ENCODE measurements at regions of chr3 and their contacts with region 1.

Region 1: DNA sequence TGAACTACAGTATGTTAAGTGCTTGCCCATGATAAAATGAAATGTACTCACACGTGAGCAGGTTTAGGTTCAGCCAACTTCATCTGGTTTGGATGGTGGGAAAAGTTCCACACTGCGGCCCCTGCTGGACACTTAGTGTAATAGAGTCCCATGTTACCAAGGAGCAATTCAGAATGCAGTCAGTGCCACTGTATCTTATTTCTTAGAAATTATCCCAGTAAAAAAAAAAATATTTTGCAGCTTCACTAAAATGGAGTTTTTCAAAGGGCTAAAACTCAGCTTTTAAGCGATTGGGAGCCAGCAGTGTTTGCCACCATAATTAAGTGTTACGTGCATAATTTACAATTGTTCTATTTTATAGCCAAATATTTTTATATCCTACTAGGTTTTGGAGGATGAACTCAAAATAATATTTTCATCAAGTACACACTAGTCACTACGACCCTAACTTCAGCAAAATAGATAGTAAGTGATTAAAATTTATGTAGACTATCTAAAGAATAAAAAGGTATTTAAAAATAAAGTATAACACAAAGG is 371.7 kb upstream of the GBE1 start:
- DNase-seq: peak; percentile 16 to 52
- ATAC-seq: peak; percentile 78 to 92
- H3K4me3 ChIP-seq: no peak overlapping the region
- H3K27ac ChIP-seq: no peak overlapping the region
- H3K4me1 ChIP-seq: no peaks in the 10 kb centered on the region
- H3K27me3 ChIP-seq: no peaks in the 10 kb centered on the region
- CTCF ChIP-seq: peak; percentile 71 to 89 (median 72)
- POLR2A ChIP-seq: no peak

Region 2: DNA sequence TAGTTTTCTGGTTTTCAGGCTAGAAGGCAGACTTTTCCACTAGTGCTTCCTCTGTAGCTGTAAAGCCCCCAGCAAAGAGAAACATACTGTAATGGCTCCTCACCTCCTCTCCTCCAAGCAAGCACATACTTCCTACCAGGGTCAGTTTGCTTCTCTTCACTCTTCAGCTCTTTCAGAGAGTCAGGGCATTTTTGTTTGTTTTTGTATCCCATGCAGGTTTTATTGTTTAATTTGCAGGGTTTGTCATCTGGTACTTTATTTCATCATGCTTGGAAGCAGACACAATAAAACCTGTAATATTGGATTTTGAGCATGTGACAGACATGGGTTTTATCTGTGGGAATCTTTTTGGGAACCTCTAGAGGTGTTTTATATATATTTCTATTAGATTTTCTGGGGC is 1612.1 kb before region 1 on chr3:
- in situ Hi-C with region 1: no loop called
- intact Hi-C with region 1: no loop called
- DNase-seq: no peak
- ATAC-seq: no peak
- H3K4me3 ChIP-seq: no peak overlapping the region
- H3K27ac ChIP-seq: no peak overlapping the region
- H3K4me1 ChIP-seq: no peaks in the 10 kb centered on the region
- H3K27me3 ChIP-seq: no peaks in the 10 kb centered on the region
- CTCF ChIP-seq: no peak
- POLR2A ChIP-seq: no peak

Region 3: DNA sequence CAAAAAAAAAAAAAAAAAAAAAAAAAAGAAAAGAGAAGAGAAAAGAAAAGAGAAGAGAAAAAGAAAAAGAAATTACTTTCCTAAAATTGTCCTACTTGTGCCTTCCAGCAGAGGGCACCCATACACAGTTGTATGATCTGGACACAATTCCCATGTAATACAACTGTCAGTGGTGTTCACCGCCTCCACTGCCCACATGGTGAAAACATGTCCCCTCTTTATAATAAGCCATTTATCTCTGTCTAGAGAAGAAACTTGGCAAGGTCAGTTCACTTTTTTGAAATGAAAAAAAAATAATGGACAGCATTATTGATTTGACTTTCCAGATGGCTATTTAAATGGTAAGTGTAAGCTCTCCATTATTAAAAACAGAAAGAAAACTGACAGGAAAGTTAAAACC is 831.1 kb before region 1 on chr3:
- in situ Hi-C with region 1: no loop called
- intact Hi-C with region 1: loop called (anchors 5 kb)
- DNase-seq: peak in 1 of 2 donors; percentile 11
- ATAC-seq: peak in 1 of 2 donors; percentile 69
- H3K4me3 ChIP-seq: no peak overlapping the region
- H3K27ac ChIP-seq: no peak overlapping the region
- H3K4me1 ChIP-seq: no peaks in the 10 kb centered on the region
- H3K27me3 ChIP-seq: no peaks in the 10 kb centered on the region
- CTCF ChIP-seq: peak in 4 of 5 experiments; percentile 35 to 53 (median 39)
- POLR2A ChIP-seq: no peak

Region 4: DNA sequence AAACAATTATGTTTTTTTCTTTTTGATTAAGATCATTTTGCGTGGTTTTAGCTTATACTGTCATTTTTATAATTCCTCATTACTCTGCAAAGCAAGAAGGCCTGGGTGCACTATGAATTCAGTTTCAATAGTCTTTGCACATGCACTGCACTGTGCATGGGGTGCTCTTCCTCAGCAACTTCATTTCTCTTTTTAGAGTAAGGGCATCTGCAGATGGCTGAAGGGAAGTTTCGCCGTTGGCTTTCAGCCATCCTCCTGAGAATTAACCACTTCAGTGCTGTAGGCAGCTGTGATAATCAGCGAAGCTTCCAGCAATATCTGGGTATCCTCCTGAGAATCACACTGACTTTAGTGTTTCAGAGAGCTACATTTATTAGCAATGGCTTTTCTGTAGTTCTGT is 656.4 kb before region 1 on chr3:
- in situ Hi-C with region 1: no loop called
- intact Hi-C with region 1: loop called (anchors 10 kb)
- DNase-seq: no peak
- ATAC-seq: peak in 1 of 2 donors; percentile 12
- H3K4me3 ChIP-seq: no peak overlapping the region
- H3K27ac ChIP-seq: no peak overlapping the region
- H3K4me1 ChIP-seq: no peaks in the 10 kb centered on the region
- H3K27me3 ChIP-seq: no peaks in the 10 kb centered on the region
- CTCF ChIP-seq: no peak
- POLR2A ChIP-seq: no peak

Region 5: GRCh38 chr3:81581966-81582599 is 551.1 kb before region 1 on chr3:
- in situ Hi-C with region 1: no loop called
- intact Hi-C with region 1: loop called (anchors 10 kb)
- DNase-seq: no peak
- ATAC-seq: no peak
- H3K4me3 ChIP-seq: no peak overlapping the region
- H3K27ac ChIP-seq: no peak overlapping the region
- H3K4me1 ChIP-seq: no peaks in the 10 kb centered on the region
- H3K27me3 ChIP-seq: no peaks in the 10 kb centered on the region
- CTCF ChIP-seq: peak in 3 of 5 experiments; percentile 31 to 42 (median 31)
- POLR2A ChIP-seq: no peak

Region 6: GRCh38 chr3:81666493-81667121 is 466.5 kb before region 1 on chr3:
- in situ Hi-C with region 1: loop called in 2 of 4 experiments (anchors 25 kb)
- intact Hi-C with region 1: loop called (anchors 10 kb)
- DNase-seq: no peak
- ATAC-seq: no peak
- H3K4me3 ChIP-seq: no peak overlapping the region
- H3K27ac ChIP-seq: peak overlapping the region in 1 of 4 donors; percentile 16
- H3K4me1 ChIP-seq: peaks cover 13 to 21% of the 10 kb centered on the region in 2 donors
- H3K27me3 ChIP-seq: no peaks in the 10 kb centered on the region
- CTCF ChIP-seq: peak; percentile 11 to 70 (median 32)
- POLR2A ChIP-seq: no peak

Region 7: DNA sequence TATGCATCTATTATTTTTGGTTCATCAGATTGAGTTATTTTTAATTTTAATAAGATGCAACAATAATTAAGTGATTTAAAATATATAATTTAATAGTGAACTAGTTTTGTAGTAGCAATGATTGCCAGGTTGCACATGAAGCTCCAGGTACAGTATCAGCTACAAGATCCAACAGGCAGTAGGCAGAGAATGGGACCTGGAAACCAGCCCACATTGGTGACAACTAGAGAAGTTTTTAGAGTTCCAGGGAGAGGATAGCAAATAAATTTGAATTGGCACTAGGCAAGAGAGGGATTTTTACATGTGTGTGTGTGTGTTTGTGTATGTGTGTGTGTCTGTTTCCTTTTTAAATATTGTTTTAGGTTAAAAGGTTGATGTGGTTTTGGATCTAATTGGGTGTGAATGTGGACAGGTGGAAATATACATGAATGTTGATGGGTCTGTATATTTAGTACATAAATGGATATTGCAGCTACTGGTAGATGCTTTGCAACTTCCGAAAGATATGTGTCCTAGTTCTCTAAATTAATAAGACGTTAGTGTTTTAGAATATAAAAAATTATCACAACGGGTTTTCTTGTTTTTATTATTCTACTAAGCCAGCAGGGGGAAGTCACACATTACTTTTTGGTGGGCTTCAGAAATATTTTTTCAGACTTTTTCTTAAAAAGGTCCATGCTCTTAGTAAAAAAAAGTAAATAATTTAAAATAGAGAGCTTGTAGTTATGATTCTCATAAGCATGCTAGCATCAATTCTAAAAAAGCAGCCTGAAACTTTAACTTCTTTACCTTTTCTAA is 261.6 kb before region 1 on chr3:
- in situ Hi-C with region 1: loop called in 1 of 4 experiments (anchors 25 kb)
- intact Hi-C with region 1: no loop called
- DNase-seq: no peak
- ATAC-seq: no peak
- H3K4me3 ChIP-seq: no peak overlapping the region
- H3K27ac ChIP-seq: no peak overlapping the region
- H3K4me1 ChIP-seq: peaks cover 4 to 5% of the 10 kb centered on the region in 2 donors
- H3K27me3 ChIP-seq: no peaks in the 10 kb centered on the region
- CTCF ChIP-seq: peak in 3 of 5 experiments; percentile 24 to 37 (median 25)
- POLR2A ChIP-seq: no peak

Region 8: GRCh38 chr3:81910244-81910852 is 222.8 kb before region 1 on chr3:
- in situ Hi-C with region 1: loop called in 1 of 4 experiments (anchors 25 kb)
- intact Hi-C with region 1: no loop called
- DNase-seq: peak in 1 of 2 donors; percentile 2
- ATAC-seq: peak in 1 of 2 donors; percentile 58
- H3K4me3 ChIP-seq: no peak overlapping the region
- H3K27ac ChIP-seq: no peak overlapping the region
- H3K4me1 ChIP-seq: peaks cover 0 to 4% of the 10 kb centered on the region in 2 donors
- H3K27me3 ChIP-seq: no peaks in the 10 kb centered on the region
- CTCF ChIP-seq: peak; percentile 31 to 73 (median 45)
- POLR2A ChIP-seq: no peak

Region 9: GRCh38 chr3:82274897-82275296 is 141.8 kb after region 1 on chr3:
- in situ Hi-C with region 1: no loop called
- intact Hi-C with region 1: no loop called
- DNase-seq: no peak
- ATAC-seq: no peak
- H3K4me3 ChIP-seq: no peak overlapping the region
- H3K27ac ChIP-seq: no peak overlapping the region
- H3K4me1 ChIP-seq: no peaks in the 10 kb centered on the region
- H3K27me3 ChIP-seq: no peaks in the 10 kb centered on the region
- CTCF ChIP-seq: no peak
- POLR2A ChIP-seq: no peak

Measured in gastrocnemius medialis (tissue), 4 donors.